CD4-positive, alpha-beta T cell (primary cell): ENCODE measurements at regions of chr12 and their contacts with region 1.

Region 1: DNA sequence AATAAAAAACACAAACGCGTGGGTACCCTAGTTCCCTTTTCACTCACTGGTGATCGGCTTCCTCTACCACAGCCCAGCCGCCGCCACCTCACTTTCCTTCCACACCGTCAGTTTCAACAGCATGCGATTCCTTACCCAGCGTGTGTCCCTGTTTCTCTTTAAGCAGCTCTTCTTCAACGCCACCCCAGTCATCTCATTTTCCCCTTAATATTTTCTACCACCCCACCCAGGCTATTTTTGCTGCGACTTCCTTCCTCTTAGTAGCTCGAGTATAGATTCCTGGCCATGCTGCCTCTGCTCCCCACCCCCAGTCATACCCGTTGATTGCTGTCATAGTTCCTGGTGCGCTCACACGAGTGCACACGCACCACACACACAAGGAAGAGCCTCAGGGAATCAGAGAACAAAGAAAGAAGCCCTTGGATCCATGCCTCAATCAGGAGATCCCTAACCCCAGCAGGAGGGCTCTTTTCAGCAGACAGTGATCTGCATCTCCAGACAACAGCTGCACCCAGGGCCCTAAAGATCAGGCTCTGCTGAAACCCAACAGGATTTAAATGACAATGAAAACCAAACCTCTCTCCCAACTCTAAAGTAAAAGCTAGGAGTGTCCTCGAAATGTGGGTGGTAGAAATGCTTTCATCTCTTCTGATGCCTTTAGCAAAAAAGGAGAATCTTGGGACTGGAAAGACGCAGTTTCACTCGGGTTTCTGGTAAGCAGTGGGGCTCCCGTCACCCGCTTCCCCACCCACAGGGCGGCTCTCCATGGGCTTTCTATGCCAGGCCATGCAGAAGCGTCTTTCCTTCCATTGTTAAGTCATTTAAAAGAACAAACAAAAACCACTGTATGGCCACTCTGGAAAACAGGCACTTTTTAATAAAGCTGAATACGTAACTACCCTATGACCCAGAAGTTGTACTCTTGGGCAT is 23.8 kb downstream of the VPS37B start:
- DNase-seq: peak in 6 of 14 experiments; percentile 30 to 72 (median 58)
- ATAC-seq: peak; percentile 43
- H3K4me3 ChIP-seq: peak overlapping the region; percentile 51
- H3K4me3 Mint-ChIP-seq: peak overlapping the region; percentile 86
- H3K27ac ChIP-seq: peak overlapping the region; percentile 18 to 74
- H3K27ac Mint-ChIP-seq: peak overlapping the region; percentile 61
- H3K4me1 ChIP-seq: peaks cover 65% of the 10 kb centered on the region
- H3K4me1 Mint-ChIP-seq: peaks cover 71% of the 10 kb centered on the region
- H3K27me3 ChIP-seq: no peaks in the 10 kb centered on the region
- H3K27me3 Mint-ChIP-seq: no peaks in the 10 kb centered on the region
- CTCF ChIP-seq: no peak

Region 2: DNA sequence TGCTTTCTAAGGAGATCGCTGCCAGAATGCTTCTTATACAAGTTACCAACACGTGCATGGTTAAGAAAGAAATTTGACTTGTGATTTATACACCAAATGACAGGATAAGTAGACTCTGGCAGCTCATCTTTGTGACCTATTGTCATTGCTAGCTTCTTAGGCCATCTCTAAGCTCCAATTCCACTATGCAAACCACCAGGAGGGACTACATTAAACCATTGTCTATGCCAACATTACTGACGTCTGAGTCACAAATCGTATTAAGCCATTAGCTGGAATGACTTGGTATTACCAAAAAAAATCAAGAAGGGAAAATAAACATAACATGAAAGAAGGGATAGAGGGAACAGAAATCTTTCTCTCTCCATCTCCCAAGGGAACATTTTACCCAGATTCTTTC is 590.0 kb before region 1 on chr12:
- CTCF ChIA-PET with region 1: no interaction called
- POLR2A ChIA-PET with region 1: no interaction called
- intact Hi-C with region 1: no loop called
- DNase-seq: no peak
- ATAC-seq: no peak
- H3K4me3 ChIP-seq: no peak overlapping the region
- H3K4me3 Mint-ChIP-seq: no peak overlapping the region
- H3K27ac ChIP-seq: no peak overlapping the region
- H3K27ac Mint-ChIP-seq: no peak overlapping the region
- H3K4me1 ChIP-seq: no peaks in the 10 kb centered on the region
- H3K4me1 Mint-ChIP-seq: no peaks in the 10 kb centered on the region
- H3K27me3 ChIP-seq: no peaks in the 10 kb centered on the region
- H3K27me3 Mint-ChIP-seq: no peaks in the 10 kb centered on the region
- CTCF ChIP-seq: no peak

Region 3: GRCh38 chr12:122888232-122888867 is 16.2 kb after region 1 on chr12:
- CTCF ChIA-PET with region 1: interaction called, 4 read pairs
- POLR2A ChIA-PET with region 1: interaction called, 81 read pairs
- intact Hi-C with region 1: loop called in 1 of 2 experiments (anchors 2 kb)
- DNase-seq: peak in 10 of 14 experiments; percentile 37 to 93 (median 62)
- ATAC-seq: peak; percentile 91
- H3K4me3 ChIP-seq: peak overlapping the region; percentile 39
- H3K4me3 Mint-ChIP-seq: peak overlapping the region; percentile 84
- H3K27ac ChIP-seq: peak overlapping the region; percentile 78 to 88
- H3K27ac Mint-ChIP-seq: peak overlapping the region; percentile 91
- H3K4me1 ChIP-seq: peaks cover 55% of the 10 kb centered on the region
- H3K4me1 Mint-ChIP-seq: peaks cover 91% of the 10 kb centered on the region
- H3K27me3 ChIP-seq: no peaks in the 10 kb centered on the region
- H3K27me3 Mint-ChIP-seq: no peaks in the 10 kb centered on the region
- CTCF ChIP-seq: no peak

Region 4: DNA sequence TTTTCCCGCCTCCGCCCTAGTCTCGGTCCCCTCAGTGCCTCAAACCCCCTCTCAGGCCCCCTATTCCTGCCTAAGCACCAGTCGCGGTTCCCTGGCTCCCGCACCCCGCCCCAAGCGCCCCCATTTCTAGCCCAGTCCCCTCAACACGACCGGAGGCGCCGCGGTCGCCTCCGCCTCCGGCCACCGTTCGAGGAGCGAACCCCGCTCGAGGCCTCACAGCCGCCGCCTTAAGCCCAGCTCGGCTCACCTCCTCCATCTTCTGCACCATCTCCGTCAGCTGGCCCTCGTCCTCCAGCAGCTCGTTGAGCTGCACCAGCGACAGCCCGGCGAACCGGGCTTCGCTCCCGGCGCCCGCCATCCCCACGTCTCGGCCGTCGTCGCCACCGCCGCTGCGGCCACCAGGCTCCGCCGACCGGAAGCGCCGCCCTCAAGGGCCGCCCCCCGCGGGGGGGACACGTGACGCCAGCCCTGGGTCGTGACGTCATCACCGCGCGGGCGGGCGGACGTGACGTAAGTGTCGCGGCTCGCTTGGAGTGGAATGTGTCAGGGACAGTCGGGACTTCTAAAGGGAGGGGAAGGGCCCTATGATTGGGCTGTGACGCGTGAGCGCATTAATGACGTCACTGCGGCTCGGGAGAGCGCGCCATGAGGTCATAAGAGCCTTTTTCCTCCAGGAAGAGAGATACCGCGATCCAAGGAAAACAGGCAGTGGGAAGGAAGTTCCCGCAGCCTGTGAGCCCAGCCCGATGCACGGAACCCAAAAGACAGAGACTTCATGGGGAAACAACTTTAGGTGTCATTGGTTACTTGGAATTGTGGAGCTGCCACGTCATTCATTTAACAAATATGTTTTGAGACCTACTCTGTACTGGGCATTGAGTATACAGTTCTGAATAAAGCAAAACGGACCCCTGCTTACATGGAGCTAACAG is 23.9 kb after region 1 on chr12 and contains the start of gene VPS37B:
- CTCF ChIA-PET with region 1: interaction called, 3 read pairs
- POLR2A ChIA-PET with region 1: interaction called, 81 read pairs
- intact Hi-C with region 1: loop called (anchors 2 to 5 kb)
- DNase-seq: peak; percentile 68 to 95 (median 84)
- ATAC-seq: peak; percentile 66
- H3K4me3 ChIP-seq: peak within 1 kb of the TSS; percentile 64
- H3K4me3 Mint-ChIP-seq: peak within 1 kb of the TSS; percentile 87
- H3K27ac ChIP-seq: peak within 1 kb of the TSS; percentile 83 to 85
- H3K27ac Mint-ChIP-seq: peak within 1 kb of the TSS; percentile 98
- H3K4me1 ChIP-seq: peaks cover 68% of the 10 kb centered on the region
- H3K4me1 Mint-ChIP-seq: peaks cover 93% of the 10 kb centered on the region
- H3K27me3 ChIP-seq: no peaks in the 10 kb centered on the region
- H3K27me3 Mint-ChIP-seq: no peaks in the 10 kb centered on the region
- CTCF ChIP-seq: no peak
- total RNA-seq, gene VPS37B: 97.7 to 104 TPM

Region 5: DNA sequence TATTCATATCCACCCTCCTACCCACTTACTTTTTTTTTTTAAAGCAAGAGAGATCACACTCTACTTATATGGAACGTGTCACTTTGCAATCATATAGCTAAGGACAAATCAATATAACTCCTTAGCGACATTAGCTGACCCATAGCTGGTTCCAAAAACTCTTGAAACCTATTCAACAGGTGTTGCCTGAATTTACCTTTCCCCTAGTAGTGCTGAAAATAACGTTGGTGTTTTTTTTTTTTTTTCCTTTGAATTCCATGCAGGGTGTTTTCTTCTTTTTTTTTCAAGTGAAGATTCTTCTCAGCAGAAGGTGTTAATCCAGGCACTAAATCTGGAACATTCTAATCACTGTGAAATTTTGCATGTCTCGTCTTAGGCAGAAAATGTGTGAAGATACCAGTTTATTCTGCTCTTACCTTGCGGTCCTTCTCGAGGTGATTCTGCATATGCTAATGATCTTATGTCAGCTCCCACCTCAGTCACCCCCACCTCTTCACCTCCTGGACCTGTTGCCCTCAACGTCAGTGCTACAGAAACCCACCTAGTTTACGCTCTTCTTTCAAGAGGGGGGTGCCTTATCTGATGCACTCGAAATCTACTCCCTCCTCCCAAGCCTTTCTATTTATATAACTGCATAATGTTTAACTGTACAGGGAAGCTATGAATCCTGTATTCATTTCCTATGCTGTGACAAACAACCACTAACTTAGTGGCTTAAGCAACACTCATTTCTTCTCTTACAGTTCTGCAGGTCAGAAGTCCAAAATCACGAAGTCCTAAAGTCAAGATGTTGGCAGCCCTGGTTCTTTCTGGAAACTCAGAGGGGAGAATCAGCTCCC is 31.0 kb after region 1 on chr12:
- CTCF ChIA-PET with region 1: interaction called, 3 read pairs
- POLR2A ChIA-PET with region 1: interaction called, 81 read pairs
- intact Hi-C with region 1: loop called (anchors 2 to 5 kb)
- DNase-seq: no peak
- ATAC-seq: no peak
- H3K4me3 ChIP-seq: no peak overlapping the region
- H3K4me3 Mint-ChIP-seq: peak overlapping the region; percentile 66
- H3K27ac ChIP-seq: no peak overlapping the region
- H3K27ac Mint-ChIP-seq: no peak overlapping the region
- H3K4me1 ChIP-seq: peaks cover 34% of the 10 kb centered on the region
- H3K4me1 Mint-ChIP-seq: peaks cover 42% of the 10 kb centered on the region
- H3K27me3 ChIP-seq: no peaks in the 10 kb centered on the region
- H3K27me3 Mint-ChIP-seq: no peaks in the 10 kb centered on the region
- CTCF ChIP-seq: no peak

Region 6: DNA sequence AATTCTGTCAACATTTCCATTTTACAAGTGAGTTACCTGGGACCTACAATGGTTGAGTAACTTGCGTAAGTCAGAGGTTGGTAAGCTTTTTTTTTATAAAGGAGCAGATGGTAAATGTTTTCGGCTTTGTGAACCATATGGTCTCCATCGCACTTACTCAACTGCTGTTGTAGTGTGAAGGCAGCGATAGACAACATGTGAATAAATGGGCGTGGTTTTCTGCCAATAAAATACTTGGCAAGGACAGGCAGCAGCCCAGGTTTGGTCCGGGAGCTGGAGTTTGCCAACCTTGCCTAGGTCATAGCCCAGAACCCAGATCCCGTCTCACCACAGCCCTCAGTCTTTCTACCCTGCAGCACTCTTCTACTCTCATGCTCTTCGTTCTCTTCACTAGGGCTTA is 736.1 kb after region 1 on chr12:
- CTCF ChIA-PET with region 1: no interaction called
- POLR2A ChIA-PET with region 1: no interaction called
- intact Hi-C with region 1: no loop called
- DNase-seq: no peak
- ATAC-seq: no peak
- H3K4me3 ChIP-seq: no peak overlapping the region
- H3K4me3 Mint-ChIP-seq: no peak overlapping the region
- H3K27ac ChIP-seq: no peak overlapping the region
- H3K27ac Mint-ChIP-seq: no peak overlapping the region
- H3K4me1 ChIP-seq: peaks cover 8% of the 10 kb centered on the region
- H3K4me1 Mint-ChIP-seq: peaks cover 14% of the 10 kb centered on the region
- H3K27me3 ChIP-seq: no peaks in the 10 kb centered on the region
- H3K27me3 Mint-ChIP-seq: no peaks in the 10 kb centered on the region
- CTCF ChIP-seq: no peak